B cell (primary cell): ENCODE measurements at regions of chr12 and their contacts with region 1.

Region 1: GRCh38 chr12:32482226-32482625 is 82.9 kb downstream of the FGD4 start:
- DNase-seq: peak; percentile 47
- ATAC-seq: peak; percentile 53
- H3K4me3 ChIP-seq: peak overlapping the region in 3 of 5 experiments; percentile 15 to 35 (median 34)
- H3K4me3 Mint-ChIP-seq: peak overlapping the region; percentile 74
- H3K27ac ChIP-seq: peak overlapping the region in 1 of 2 donors; percentile 52
- H3K27ac Mint-ChIP-seq: peak overlapping the region; percentile 42
- H3K4me1 ChIP-seq: peaks cover 39 to 44% of the 10 kb centered on the region in 2 donors
- H3K4me1 Mint-ChIP-seq: peaks cover 47% of the 10 kb centered on the region
- H3K27me3 ChIP-seq: no peaks in the 10 kb centered on the region
- H3K27me3 Mint-ChIP-seq: no peaks in the 10 kb centered on the region
- CTCF ChIP-seq: no peak

Region 2: GRCh38 chr12:32025906-32026305 is 456.3 kb before region 1 on chr12:
- CTCF ChIA-PET with region 1: no interaction called
- POLR2A ChIA-PET with region 1: no interaction called
- intact Hi-C with region 1: no loop called
- DNase-seq: peak; percentile 25
- ATAC-seq: peak; percentile 37
- H3K4me3 ChIP-seq: no peak overlapping the region
- H3K4me3 Mint-ChIP-seq: peak overlapping the region; percentile 11
- H3K27ac ChIP-seq: peak overlapping the region in 1 of 2 donors; percentile 41
- H3K27ac Mint-ChIP-seq: no peak overlapping the region
- H3K4me1 ChIP-seq: peaks cover 29 to 33% of the 10 kb centered on the region in 2 donors
- H3K4me1 Mint-ChIP-seq: peaks cover 33% of the 10 kb centered on the region
- H3K27me3 ChIP-seq: no peaks in the 10 kb centered on the region
- H3K27me3 Mint-ChIP-seq: no peaks in the 10 kb centered on the region
- CTCF ChIP-seq: no peak

Region 3: GRCh38 chr12:32467959-32468863 is 14.0 kb before region 1 on chr12:
- CTCF ChIA-PET with region 1: no interaction called
- POLR2A ChIA-PET with region 1: interaction called, 11 read pairs
- intact Hi-C with region 1: no loop called
- DNase-seq: peak; percentile 20
- ATAC-seq: no peak
- H3K4me3 ChIP-seq: peak overlapping the region in 3 of 5 experiments; percentile 5 to 52 (median 22)
- H3K4me3 Mint-ChIP-seq: peak overlapping the region; percentile 72
- H3K27ac ChIP-seq: peak overlapping the region; percentile 43 to 81
- H3K27ac Mint-ChIP-seq: peak overlapping the region; percentile 82
- H3K4me1 ChIP-seq: peaks cover 15 to 25% of the 10 kb centered on the region in 2 donors
- H3K4me1 Mint-ChIP-seq: peaks cover 21% of the 10 kb centered on the region
- H3K27me3 ChIP-seq: no peaks in the 10 kb centered on the region
- H3K27me3 Mint-ChIP-seq: no peaks in the 10 kb centered on the region
- CTCF ChIP-seq: no peak

Region 4: DNA sequence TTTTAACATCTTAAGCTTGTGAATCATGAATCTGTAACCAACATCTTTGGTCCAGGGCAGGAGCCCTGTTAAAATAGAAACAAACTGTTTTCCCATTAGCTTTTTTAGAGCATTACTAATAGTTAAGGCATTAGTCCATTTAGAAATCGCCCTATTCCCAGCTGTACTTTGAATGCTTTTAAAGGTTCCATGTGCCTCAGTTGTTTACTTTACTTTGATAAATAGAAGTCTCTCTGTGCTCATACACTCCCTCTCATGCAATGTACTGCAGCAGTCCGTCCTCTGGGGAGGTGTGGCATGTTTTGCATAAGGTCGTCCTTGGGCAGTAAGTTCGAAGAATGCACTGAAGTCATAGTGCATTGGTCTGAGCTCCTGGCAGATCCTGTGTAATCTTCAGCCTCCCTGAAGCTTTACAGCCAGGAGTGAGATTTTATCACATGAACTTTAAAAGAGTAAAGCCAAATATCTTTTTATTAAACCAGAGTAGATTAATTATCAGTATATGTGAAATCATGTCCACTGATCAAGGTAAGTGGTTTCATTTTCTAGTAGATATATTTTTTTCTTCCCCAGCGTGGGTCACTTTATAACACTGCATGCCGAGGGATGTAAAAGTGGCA is 51.9 kb after region 1 on chr12:
- CTCF ChIA-PET with region 1: no interaction called
- POLR2A ChIA-PET with region 1: no interaction called
- intact Hi-C with region 1: loop called (anchors 10 kb)
- DNase-seq: peak; percentile 38
- ATAC-seq: peak; percentile 79
- H3K4me3 ChIP-seq: peak overlapping the region; percentile 24 to 57 (median 38)
- H3K4me3 Mint-ChIP-seq: peak overlapping the region; percentile 88
- H3K27ac ChIP-seq: peak overlapping the region; percentile 37 to 61
- H3K27ac Mint-ChIP-seq: peak overlapping the region; percentile 59
- H3K4me1 ChIP-seq: peaks cover 22 to 33% of the 10 kb centered on the region in 2 donors
- H3K4me1 Mint-ChIP-seq: peaks cover 41% of the 10 kb centered on the region
- H3K27me3 ChIP-seq: no peaks in the 10 kb centered on the region
- H3K27me3 Mint-ChIP-seq: no peaks in the 10 kb centered on the region
- CTCF ChIP-seq: no peak

Region 5: DNA sequence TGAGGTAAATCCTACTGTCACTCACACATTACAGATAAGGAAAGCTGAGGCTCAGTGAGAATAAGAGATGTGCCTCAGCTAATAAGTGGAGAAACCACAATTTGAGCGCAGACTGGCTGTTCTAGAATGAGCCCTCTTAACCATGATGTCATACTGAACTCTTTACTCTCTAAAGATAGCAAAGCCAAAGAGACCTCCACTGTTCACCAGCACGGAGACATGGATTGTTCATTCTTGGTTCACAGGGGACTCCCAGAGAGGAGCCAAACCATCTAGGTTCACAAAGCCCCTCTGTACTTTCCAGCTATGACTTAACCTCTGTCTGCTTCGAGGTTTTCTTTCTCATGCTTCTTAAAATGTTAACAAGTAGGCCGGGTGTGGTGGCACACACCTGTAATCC is 306.2 kb after region 1 on chr12:
- CTCF ChIA-PET with region 1: no interaction called
- POLR2A ChIA-PET with region 1: no interaction called
- intact Hi-C with region 1: no loop called
- DNase-seq: no peak
- ATAC-seq: no peak
- H3K4me3 ChIP-seq: no peak overlapping the region
- H3K4me3 Mint-ChIP-seq: no peak overlapping the region
- H3K27ac ChIP-seq: no peak overlapping the region
- H3K27ac Mint-ChIP-seq: no peak overlapping the region
- H3K4me1 ChIP-seq: no peaks in the 10 kb centered on the region
- H3K4me1 Mint-ChIP-seq: no peaks in the 10 kb centered on the region
- H3K27me3 ChIP-seq: no peaks in the 10 kb centered on the region
- H3K27me3 Mint-ChIP-seq: peaks cover 16% of the 10 kb centered on the region
- CTCF ChIP-seq: no peak